ENCODE measurements at regions of chr7 and their contacts with region 1.

Region 1: DNA sequence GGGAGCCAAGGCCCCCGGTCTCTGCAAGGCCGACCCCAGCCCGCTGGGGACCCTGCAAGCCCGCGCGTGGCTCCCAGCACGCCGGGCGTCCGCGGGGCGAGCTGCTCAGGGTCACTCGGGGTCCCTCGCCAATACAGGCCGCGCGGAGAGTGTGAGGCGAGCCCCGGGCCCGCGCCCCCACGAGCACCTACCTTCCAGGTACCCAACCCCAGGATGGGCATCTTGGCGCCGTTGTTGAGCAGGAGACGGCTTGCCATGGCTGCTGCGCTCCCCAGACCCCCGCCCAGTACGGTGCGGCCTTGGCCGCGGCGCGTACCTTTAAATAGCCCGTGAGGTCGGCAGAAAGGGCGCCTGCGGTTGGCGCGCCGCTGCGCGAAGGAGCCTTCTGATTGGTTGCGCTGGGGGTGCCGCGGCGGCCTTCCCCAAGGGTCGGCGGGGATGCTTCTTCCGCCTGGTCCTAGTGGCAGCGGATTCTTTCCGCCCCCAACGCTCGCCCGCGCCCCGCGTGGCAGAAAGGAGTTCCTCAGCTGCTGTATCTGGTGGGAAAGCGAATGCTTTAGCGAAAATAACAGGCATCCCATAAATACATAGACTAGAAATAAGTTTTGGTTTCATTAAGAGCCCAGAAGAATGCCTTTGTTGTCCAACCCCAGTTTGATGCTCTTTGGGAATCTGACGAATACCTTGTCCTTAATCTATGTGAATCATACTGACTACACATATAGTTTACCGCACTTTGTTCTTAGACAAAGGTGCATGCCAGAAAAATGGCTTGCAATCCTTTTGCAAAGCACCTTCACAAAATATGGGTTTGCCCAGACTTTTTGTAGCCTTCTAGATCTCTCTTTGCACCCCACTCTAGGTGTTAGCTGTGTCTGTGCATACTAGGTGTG is at the start of gene AKR1B1:
- DNase-seq: peak; percentile 45
- H3K4me3 ChIP-seq: peak within 1 kb of the TSS; percentile 91
- CTCF ChIP-seq: peak; percentile 85

Region 2: DNA sequence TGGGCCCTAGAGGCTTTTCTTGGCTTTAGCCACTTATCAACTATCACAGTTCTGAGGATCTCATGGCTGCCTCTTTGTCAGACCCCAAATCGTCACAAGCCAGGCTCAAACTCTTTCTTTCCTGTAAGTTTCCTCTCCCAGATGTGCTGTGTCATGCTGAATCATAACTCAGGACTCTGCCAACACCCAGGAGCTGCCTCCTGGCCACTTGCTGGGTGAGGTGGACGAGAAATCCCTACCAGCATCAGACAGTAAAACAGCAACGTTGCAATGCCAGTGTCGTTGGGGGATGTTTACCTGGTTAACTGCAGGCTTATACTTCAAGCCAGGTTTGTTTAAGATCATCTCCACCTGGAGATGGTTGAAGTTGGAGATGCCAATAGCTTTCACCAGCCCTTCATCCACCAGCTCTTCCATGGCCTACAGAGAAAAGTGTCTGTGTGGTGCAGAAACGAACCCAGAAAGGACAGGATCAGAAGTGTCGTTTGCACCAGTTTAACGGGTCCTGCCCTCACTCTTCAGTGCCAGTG is 10.3 kb before region 1 on chr7:
- CTCF ChIA-PET with region 1: interaction called, 58 read pairs
- POLR2A ChIA-PET with region 1: interaction called, 5 read pairs
- DNase-seq: peak; percentile 60
- H3K4me3 ChIP-seq: no peak overlapping the region
- CTCF ChIP-seq: no peak

Region 3: GRCh38 chr7:134470864-134471263 is 11.8 kb after region 1 on chr7:
- CTCF ChIA-PET with region 1: interaction called, 12 read pairs
- POLR2A ChIA-PET with region 1: no interaction called
- DNase-seq: no peak
- H3K4me3 ChIP-seq: no peak overlapping the region
- CTCF ChIP-seq: no peak

Region 4: GRCh38 chr7:134480736-134481135 is 21.7 kb after region 1 on chr7:
- CTCF ChIA-PET with region 1: interaction called, 64 read pairs
- POLR2A ChIA-PET with region 1: interaction called, 3 read pairs
- DNase-seq: no peak
- H3K4me3 ChIP-seq: no peak overlapping the region
- CTCF ChIP-seq: no peak

Measured in AG04449 (cell line).